Aorta (tissue), 5 donors: ENCODE measurements at regions of chr2 and their contacts with region 1.

Region 1: GRCh38 chr2:74482801-74483674 is at the starts of genes CCDC142 and TTC31:
- DNase-seq: peak; percentile 97 to 98
- ATAC-seq: peak; percentile 99
- H3K4me3 ChIP-seq: peak within 1 kb of the TSS; percentile 50 to 62
- H3K27ac ChIP-seq: peak within 1 kb of the TSS in 1 of 2 donors; percentile 53
- H3K4me1 ChIP-seq: peaks cover 0 to 3% of the 10 kb centered on the region in 2 donors
- H3K27me3 ChIP-seq: no peaks in the 10 kb centered on the region
- total RNA-seq, gene CCDC142: 16.1 to 26.0 TPM
- total RNA-seq, gene TTC31: 19.2 to 29.5 TPM

Region 2: GRCh38 chr2:74454654-74455511 is 28.2 kb before region 1 on chr2 and contains the start of gene INO80B:
- intact Hi-C with region 1: loop called (anchors 2 kb)
- DNase-seq: peak; percentile 96 to 97
- ATAC-seq: peak; percentile 91
- H3K4me3 ChIP-seq: peak within 1 kb of the TSS; percentile 45 to 58
- H3K27ac ChIP-seq: no peak within 1 kb of the TSS
- H3K4me1 ChIP-seq: peaks cover 2 to 3% of the 10 kb centered on the region in 2 donors
- H3K27me3 ChIP-seq: no peaks in the 10 kb centered on the region
- total RNA-seq, gene INO80B: 29.3 to 38.2 TPM